Vagina (tissue), 2 donors: ENCODE measurements at regions of chr16 and their contacts with region 1.

Region 1: DNA sequence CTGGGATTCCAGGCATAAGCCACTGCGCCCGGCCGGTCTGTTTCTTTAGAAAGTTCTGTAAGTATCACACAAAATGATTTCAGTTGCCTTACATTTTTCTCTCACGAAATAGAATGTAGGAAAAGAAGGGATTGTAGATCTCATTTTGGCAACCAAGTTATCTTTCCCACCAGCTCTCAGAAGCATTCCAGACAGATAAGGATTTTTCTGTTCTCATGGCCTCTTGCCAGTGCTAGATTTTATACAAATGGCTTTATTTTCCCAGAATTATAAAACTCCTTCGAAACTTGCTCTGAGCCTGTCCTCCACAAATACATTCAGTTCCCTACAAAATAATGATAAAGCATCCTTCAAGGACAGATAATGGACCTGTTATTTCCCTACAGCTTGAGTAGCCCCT is 46.9 kb downstream of the LCMT1 start:
- DNase-seq: no peak
- H3K4me3 ChIP-seq: no peak overlapping the region
- H3K27ac ChIP-seq: no peak overlapping the region
- H3K4me1 ChIP-seq: no peaks in the 10 kb centered on the region
- H3K27me3 ChIP-seq: no peaks in the 10 kb centered on the region
- CTCF ChIP-seq: no peak
- POLR2A ChIP-seq: no peak

Region 2: DNA sequence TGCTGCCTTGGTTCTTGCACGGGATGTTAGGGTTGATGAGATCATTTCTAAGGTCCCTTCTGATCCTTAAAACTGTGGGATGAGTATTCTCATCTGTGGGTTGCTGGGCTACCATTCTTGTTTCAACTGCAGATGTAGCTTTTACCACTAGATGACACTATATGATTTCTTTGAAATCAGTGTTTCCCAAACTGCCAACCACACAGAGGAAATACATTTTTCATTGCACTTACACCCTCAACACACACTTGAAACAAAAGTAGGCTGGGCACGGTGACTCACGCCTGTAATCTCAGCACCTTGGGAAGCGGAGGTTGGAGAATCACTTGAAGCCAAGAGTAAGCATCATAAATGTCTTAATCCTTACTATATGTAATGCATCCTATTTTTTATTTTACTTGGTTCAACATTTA is 31.6 kb before region 1 on chr16:
- intact Hi-C with region 1: loop called (anchors 2 kb)
- DNase-seq: no peak
- H3K4me3 ChIP-seq: no peak overlapping the region
- H3K27ac ChIP-seq: no peak overlapping the region
- H3K4me1 ChIP-seq: peaks cover 18% of the 10 kb centered on the region
- H3K27me3 ChIP-seq: no peaks in the 10 kb centered on the region
- CTCF ChIP-seq: no peak
- POLR2A ChIP-seq: no peak